GM13977 (cell line): ENCODE measurements at regions of chr12 and their contacts with region 1.

Region 1: GRCh38 chr12:12334367-12335040 is 15.5 kb downstream of the MANSC1 start:
- DNase-seq: peak; percentile 77
- CTCF ChIP-seq: peak; percentile 85

Region 2: GRCh38 chr12:11553871-11554533 is 780.5 kb before region 1 on chr12:
- in situ Hi-C with region 1: loop called (anchors 25 kb)
- DNase-seq: peak; percentile 74
- CTCF ChIP-seq: peak; percentile 60

Region 3: GRCh38 chr12:12070674-12071656 is 263.5 kb before region 1 on chr12 and contains the start of gene BCL2L14:
- in situ Hi-C with region 1: loop called (anchors 25 kb)
- DNase-seq: peak; percentile 69
- CTCF ChIP-seq: no peak